ENCODE measurements at regions of chr10 and their contacts with region 1.

Region 1: DNA sequence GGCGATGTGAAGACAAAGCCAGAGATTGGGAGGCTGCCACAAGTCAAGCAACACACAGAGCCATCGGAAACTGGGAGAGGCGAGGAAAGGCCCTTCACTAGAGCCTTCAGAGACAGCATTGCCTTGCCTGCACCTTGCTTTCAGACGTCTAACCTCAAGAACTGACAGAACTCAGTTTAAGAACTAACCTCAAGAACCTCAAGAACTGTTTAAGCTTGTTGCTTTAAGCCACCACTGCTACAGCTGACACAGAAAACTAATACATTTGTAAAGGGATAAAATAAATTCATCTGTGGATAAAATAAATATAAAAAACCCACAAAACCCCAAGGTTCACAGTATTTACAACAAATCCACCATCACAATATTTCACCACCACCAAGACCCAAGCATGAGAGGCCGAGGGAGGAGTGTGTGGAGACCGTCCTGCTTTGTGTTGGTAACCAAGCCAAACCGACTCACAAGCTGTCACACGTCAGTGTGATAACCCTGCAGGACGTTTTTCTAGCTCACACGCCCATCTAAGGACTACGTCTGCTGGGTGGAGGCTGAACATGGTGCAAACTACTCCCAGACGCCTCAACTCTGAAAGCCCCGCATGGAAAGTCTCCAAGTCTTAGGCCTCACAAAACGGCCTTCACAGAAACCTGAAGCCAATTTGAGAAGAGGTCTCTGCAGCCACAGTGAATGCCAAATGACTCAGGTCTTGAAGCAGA is 116.8 kb downstream of the ABLIM1 start:
- DNase-seq: peak; percentile 74
- H3K4me3 Mint-ChIP-seq: peak overlapping the region; percentile 61
- H3K27ac Mint-ChIP-seq: peak overlapping the region; percentile 90
- H3K4me1 Mint-ChIP-seq: peaks cover 82% of the 10 kb centered on the region
- H3K27me3 Mint-ChIP-seq: no peaks in the 10 kb centered on the region

Region 2: GRCh38 chr10:114492351-114493037 is 48.7 kb before region 1 on chr10:
- intact Hi-C with region 1: loop called (anchors 1 kb)
- DNase-seq: peak; percentile 26
- H3K4me3 Mint-ChIP-seq: peak overlapping the region; percentile 16
- H3K27ac Mint-ChIP-seq: peak overlapping the region; percentile 32
- H3K4me1 Mint-ChIP-seq: peaks cover 72% of the 10 kb centered on the region
- H3K27me3 Mint-ChIP-seq: no peaks in the 10 kb centered on the region

Region 3: GRCh38 chr10:114526504-114527238 is 14.6 kb before region 1 on chr10:
- intact Hi-C with region 1: loop called (anchors 1 kb)
- DNase-seq: peak; percentile 82
- H3K4me3 Mint-ChIP-seq: peak overlapping the region; percentile 87
- H3K27ac Mint-ChIP-seq: peak overlapping the region; percentile 92
- H3K4me1 Mint-ChIP-seq: peaks cover 58% of the 10 kb centered on the region
- H3K27me3 Mint-ChIP-seq: peaks cover 2% of the 10 kb centered on the region

Region 4: DNA sequence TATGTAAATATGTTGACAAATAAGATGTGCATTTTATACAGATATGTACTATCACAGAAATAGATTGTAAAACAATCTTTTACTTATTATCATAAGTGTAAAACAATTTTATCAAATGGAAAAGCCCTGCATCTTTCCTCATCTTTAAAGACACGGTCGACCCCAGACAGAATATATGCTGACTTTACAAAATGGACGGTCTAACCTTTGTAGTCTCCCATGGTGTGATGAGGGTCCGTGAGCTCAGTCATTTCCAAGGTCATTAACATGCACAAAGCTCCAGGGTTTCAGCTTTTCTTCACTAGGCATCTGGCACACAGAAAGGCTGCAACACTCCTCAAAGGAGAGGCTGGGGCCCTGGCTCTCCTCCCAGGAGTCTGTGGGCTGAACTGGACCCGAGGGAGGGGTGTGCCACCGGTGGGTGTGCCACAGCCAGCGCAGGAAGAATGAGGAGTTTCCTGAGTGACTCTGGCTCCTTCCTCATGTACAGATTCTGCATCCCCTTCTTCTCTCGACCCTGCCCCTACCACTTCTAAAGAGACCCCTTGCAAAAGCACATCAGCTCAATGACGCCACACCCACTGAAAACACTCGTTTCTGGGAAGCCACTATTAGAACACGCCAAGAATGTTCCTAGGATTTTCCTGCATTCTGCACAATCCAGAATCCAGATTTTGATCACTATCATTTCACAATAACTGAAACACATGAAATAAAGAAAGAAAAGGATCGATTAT is 143.0 kb after region 1 on chr10:
- intact Hi-C with region 1: no loop called
- DNase-seq: no peak
- H3K4me3 Mint-ChIP-seq: no peak overlapping the region
- H3K27ac Mint-ChIP-seq: no peak overlapping the region
- H3K4me1 Mint-ChIP-seq: no peaks in the 10 kb centered on the region
- H3K27me3 Mint-ChIP-seq: peaks cover 14% of the 10 kb centered on the region

Region 5: DNA sequence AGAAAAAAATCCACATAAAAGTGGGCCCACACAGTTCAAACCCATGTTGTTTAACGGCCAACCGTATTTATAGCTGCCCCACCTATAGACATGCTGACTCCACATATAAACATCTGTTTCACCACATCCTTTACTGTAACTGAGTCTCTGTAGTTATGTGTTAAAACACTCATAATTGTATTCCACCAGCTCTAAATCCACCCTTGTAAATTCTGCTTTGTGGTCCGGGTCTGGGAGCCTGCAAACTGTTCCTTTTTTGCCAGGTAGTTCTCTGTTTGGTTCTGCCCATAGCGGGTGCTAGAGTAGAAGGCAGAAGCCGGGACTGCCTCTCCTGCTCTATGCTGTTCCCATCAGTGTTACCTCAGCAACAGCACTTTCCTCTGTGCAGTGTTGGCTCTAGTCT is 260.2 kb after region 1 on chr10:
- intact Hi-C with region 1: loop called (anchors 1 kb)
- DNase-seq: peak; percentile 43
- H3K4me3 Mint-ChIP-seq: peak overlapping the region; percentile 77
- H3K27ac Mint-ChIP-seq: peak overlapping the region; percentile 79
- H3K4me1 Mint-ChIP-seq: peaks cover 47% of the 10 kb centered on the region
- H3K27me3 Mint-ChIP-seq: no peaks in the 10 kb centered on the region

Measured in activated T-helper 1 cell treated with anti-CD3 and anti-CD28 coated beads, Interleukin-12 subunit alpha, Interleukin-12 subunit beta, Interleukin-2, Interleukin-4 antibody, amounts not matched to agents 30 ng/mL and 10 ng/mL and 1 ng/mL, durations not matched to agents 14 hours and 24 hours and 36 hours (primary cell).